H1 (cell line): ENCODE measurements at regions of chr16 and their contacts with region 1.

Region 1: DNA sequence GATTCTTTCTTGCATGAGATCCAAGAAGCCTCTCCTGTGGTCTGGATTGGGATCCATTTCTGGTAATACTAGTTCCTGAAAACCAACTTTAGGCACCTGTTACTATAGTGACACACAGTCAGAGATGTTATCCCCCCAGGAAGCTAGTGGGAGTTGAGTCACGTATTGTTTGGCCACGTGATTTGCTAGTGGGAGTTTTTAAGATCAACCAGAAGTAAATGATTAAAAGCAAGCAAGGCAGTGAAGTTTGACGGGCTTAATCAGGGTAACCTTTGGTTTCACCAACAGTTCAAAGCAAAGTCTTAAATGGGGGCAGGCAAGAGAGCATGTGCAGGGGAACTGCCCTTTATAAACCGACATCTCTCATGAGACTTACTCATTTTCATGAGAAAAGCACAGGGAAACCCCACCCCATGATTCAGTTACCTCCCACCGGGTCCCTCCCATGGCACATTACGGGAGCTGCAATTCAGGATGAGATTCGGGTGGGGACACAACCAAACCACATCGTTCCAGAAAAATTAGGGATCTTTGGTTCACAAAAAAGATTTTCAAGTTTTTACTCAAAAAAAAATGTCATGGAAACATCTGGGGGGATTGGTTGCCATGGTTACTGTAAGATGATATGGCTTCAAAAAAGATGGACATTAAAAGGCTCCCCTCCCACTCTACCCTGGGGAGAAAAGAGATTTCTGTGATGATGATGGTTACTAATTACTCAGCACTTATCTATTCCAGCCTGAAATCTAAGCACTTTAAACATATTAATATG is 483.1 kb upstream of the ERCC4 start:
- DNase-seq: no peak
- H3K4me3 ChIP-seq: no peak overlapping the region
- H3K27ac ChIP-seq: no peak overlapping the region
- H3K4me1 ChIP-seq: peaks cover 0 to 10% (median 3%) of the 10 kb centered on the region in 4 experiments; a peak in 4 of 7 replicates
- H3K27me3 ChIP-seq: no peaks in the 10 kb centered on the region
- CTCF ChIP-seq: no peak
- EP300 ChIP-seq: no peak
- POLR2A ChIP-seq: no peak
- RAD21 ChIP-seq: no peak

Region 2: DNA sequence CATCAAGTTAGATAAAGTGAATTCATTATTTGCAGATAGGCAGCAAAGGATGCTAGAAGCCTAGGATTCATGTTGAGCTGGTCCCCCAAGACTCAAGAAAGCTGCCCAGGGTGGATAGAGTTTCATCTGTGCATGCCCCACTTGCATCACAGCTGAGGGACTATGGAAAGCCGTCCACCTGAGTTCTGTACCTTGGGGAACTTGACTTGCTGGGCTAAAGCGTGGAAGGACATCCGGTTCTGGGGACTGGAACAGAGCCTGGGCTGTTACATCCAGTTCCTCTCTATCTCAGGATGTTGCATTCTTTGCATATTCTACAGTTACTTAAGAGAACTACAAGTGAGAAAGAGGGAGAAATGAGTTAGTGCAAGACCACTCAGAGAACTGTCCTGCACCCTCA is 77.0 kb before region 1 on chr16:
- CTCF ChIA-PET with region 1: no interaction called
- POLR2A ChIA-PET with region 1: no interaction called
- DNase-seq: no peak
- H3K4me3 ChIP-seq: no peak overlapping the region
- H3K27ac ChIP-seq: no peak overlapping the region
- H3K4me1 ChIP-seq: no peaks in the 10 kb centered on the region; a peak in 2 of 7 replicates
- H3K27me3 ChIP-seq: no peaks in the 10 kb centered on the region
- CTCF ChIP-seq: no peak
- EP300 ChIP-seq: no peak
- POLR2A ChIP-seq: no peak
- RAD21 ChIP-seq: no peak

Region 3: GRCh38 chr16:13426269-13426668 is 10.6 kb before region 1 on chr16:
- CTCF ChIA-PET with region 1: interaction called, 18 read pairs
- POLR2A ChIA-PET with region 1: no interaction called
- DNase-seq: no peak
- H3K4me3 ChIP-seq: no peak overlapping the region
- H3K27ac ChIP-seq: no peak overlapping the region
- H3K4me1 ChIP-seq: peaks cover 0 to 3% (median 2%) of the 10 kb centered on the region in 4 experiments; a peak in 3 of 7 replicates
- H3K27me3 ChIP-seq: no peaks in the 10 kb centered on the region
- CTCF ChIP-seq: peak; percentile 42 to 89 (median 65)
- EP300 ChIP-seq: no peak
- POLR2A ChIP-seq: no peak
- RAD21 ChIP-seq: peak; percentile 63 to 70

Region 4: GRCh38 chr16:13453938-13454553 is 17.2 kb after region 1 on chr16:
- CTCF ChIA-PET with region 1: interaction called, 12 read pairs
- POLR2A ChIA-PET with region 1: interaction called, 3 read pairs
- DNase-seq: peak in 1 of 2 experiments; percentile 72
- H3K4me3 ChIP-seq: no peak overlapping the region
- H3K27ac ChIP-seq: no peak overlapping the region
- H3K4me1 ChIP-seq: no peaks in the 10 kb centered on the region
- H3K27me3 ChIP-seq: no peaks in the 10 kb centered on the region
- CTCF ChIP-seq: peak in 2 of 3 experiments; percentile 61 to 76; a peak in 3 of 4 replicates
- EP300 ChIP-seq: no peak
- POLR2A ChIP-seq: no peak
- RAD21 ChIP-seq: peak; percentile 81

Region 5: GRCh38 chr16:13471036-13471435 is 34.2 kb after region 1 on chr16:
- CTCF ChIA-PET with region 1: no interaction called
- POLR2A ChIA-PET with region 1: no interaction called
- DNase-seq: no peak
- H3K4me3 ChIP-seq: no peak overlapping the region
- H3K27ac ChIP-seq: no peak overlapping the region
- H3K4me1 ChIP-seq: no peaks in the 10 kb centered on the region
- H3K27me3 ChIP-seq: no peaks in the 10 kb centered on the region
- CTCF ChIP-seq: no peak
- EP300 ChIP-seq: no peak
- POLR2A ChIP-seq: no peak
- RAD21 ChIP-seq: no peak